ENCODE measurements at regions of chr6 and their contacts with region 1.

Region 1: DNA sequence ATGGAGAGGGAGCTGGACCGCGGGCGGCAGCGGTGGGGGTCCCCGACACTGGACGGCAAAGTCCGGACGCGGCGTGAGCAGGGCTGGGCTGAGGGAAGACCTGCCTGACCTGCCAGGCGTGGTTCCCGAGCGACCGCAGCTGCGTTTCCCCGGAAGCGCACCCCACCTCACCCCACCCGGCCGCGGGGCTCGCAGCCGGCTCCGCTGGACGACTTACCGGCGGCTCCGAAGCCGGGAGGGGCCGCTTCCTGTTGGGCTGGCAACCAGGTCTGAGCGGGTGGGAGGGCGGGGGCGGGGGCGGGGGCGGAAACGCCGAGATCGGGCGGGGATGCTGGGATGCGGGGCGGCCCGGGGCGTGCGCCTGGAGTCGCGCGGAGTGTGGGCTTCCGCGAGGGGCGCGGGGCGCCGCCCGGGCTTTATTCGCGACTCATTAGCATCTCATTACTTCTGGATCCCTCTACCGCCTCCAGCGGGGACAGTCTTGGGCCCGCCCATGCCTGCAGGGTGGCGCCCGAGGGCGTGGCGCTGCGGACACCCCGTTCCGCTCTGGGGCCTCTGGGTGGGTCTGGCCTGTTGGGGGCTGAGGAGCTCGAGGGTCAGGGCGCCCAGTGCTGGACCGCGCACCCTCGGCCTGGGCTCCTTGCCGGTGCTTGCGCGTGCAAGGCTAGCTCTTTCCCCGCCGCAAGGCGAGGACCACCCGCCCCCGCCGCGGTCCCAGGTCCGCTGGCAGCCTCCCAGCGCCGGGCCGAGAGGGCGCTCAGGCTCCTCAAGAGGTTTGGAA is at the start of gene MICAL1:
- DNase-seq: peak; percentile 67 to 86 (median 76)
- ATAC-seq: peak; percentile 59 to 70
- H3K4me3 Mint-ChIP-seq: peak within 1 kb of the TSS; percentile 89 to 99 (median 98)
- H3K27ac Mint-ChIP-seq: peak within 1 kb of the TSS; percentile 93 to 100 (median 98)
- H3K4me1 Mint-ChIP-seq: peaks cover 28 to 82% (median 70%) of the 10 kb centered on the region in 4 donors
- H3K27me3 Mint-ChIP-seq: peaks cover 0 to 1% (median 0%) of the 10 kb centered on the region in 5 donors
- polyA plus RNA-seq, gene MICAL1: 8.9 to 13.8 (median 13.2) TPM

Region 2: GRCh38 chr6:109440331-109441068 is 15.2 kb before region 1 on chr6 and contains the starts of genes PPIL6 and SMPD2:
- POLR2A ChIA-PET with region 1: interaction called, 131 read pairs
- DNase-seq: peak; percentile 61 to 86 (median 78)
- ATAC-seq: peak; percentile 78 to 79
- H3K4me3 Mint-ChIP-seq: peak within 1 kb of the TSS; percentile 89 to 97 (median 93)
- H3K27ac Mint-ChIP-seq: peak within 1 kb of the TSS; percentile 78 to 98 (median 96)
- H3K4me1 Mint-ChIP-seq: peaks cover 20 to 32% (median 29%) of the 10 kb centered on the region in 4 donors
- H3K27me3 Mint-ChIP-seq: no peaks in the 10 kb centered on the region
- polyA plus RNA-seq, gene PPIL6: 0.25 to 1.7 (median 0.63) TPM
- polyA plus RNA-seq, gene SMPD2: 5.8 to 8.2 (median 6.7) TPM

Region 3: DNA sequence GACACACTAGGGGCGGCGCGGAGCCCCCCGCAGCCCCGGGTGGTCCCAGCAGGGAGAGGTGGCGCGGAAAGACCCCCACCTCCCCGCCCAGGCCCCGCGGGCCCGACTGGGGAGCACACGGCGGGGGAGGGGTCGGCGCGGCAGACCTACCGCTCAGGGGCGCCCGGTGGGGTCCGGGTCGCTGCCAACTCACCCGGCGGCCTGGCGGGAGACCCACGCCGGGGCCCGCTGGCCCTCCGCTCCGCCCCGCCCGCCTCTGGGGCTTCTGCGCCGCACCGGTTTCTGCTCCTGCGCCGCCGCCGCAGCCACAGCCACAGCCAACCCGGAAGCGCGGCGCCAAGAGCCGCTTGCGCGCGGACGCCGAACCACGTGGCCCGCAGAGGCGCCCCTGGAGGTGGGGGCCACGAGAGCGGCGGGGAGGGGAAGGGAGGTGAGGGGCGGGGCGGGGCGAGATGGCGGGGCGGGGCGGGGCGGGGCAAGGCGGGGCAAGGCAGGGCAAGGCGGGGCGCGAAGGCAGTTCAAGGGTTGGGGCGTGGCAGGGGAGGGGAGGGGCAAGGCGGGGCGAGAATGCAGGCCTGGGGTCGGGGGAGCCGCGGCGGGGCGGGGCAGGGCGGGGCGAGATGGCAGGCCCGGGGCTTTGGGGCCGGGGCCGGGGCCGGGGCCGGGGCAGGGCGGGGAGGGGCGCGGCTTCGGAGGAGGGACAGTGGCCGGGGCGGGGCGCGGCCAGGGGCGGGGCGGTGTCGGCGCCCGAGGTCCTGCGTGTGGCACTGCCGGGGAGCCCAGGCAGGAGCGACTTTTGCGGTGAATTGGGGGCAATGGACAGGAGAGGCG is 27.4 kb after region 1 on chr6 and contains the start of gene ZBTB24:
- POLR2A ChIA-PET with region 1: interaction called, 80 read pairs
- DNase-seq: peak; percentile 79 to 94 (median 88)
- ATAC-seq: peak; percentile 86 to 87
- H3K4me3 Mint-ChIP-seq: peak within 1 kb of the TSS; percentile 82 to 98 (median 94)
- H3K27ac Mint-ChIP-seq: peak within 1 kb of the TSS; percentile 88 to 95 (median 93)
- H3K4me1 Mint-ChIP-seq: peaks cover 34 to 56% (median 51%) of the 10 kb centered on the region in 4 donors
- H3K27me3 Mint-ChIP-seq: no peaks in the 10 kb centered on the region
- polyA plus RNA-seq, gene ZBTB24: 6.6 to 8.8 (median 8.2) TPM

Region 4: DNA sequence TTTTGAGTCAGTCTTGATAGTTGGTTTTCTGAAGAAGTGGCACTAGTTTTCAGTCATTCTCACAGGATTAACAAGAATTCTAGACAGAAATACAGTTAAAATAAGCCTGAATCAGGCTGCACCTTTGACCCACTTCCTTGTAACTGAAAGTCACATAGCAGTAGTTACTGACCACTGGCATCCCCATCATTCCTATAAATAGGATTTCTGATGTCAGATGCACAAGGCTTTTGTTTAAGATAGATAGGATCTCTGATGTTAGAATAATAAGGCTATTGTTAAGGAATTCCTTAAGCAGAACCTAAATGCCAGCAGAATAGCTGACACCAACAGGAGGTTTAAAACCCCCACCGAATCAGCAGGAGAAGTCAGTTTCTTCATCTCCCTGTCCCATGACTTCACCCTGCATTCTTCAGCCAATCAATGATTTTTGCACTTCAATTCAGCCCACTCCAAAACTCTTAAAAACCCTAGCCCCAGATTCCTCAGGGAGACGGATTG is 57.9 kb after region 1 on chr6:
- POLR2A ChIA-PET with region 1: no interaction called
- DNase-seq: no peak
- ATAC-seq: no peak
- H3K4me3 Mint-ChIP-seq: no peak overlapping the region
- H3K27ac Mint-ChIP-seq: peak overlapping the region in 1 of 10 donors; percentile 66
- H3K4me1 Mint-ChIP-seq: peaks cover 17 to 31% (median 29%) of the 10 kb centered on the region in 4 donors
- H3K27me3 Mint-ChIP-seq: no peaks in the 10 kb centered on the region

Measured in naive thymus-derived CD8-positive, alpha-beta T cell (primary cell).